ENCODE measurements at regions of chr16 and their contacts with region 1.

Region 1: GRCh38 chr16:21554795-21555585 is 44.4 kb upstream of the METTL9 start:
- DNase-seq: peak; percentile 81 to 96 (median 89)
- ATAC-seq: peak; percentile 99
- H3K4me3 ChIP-seq: peak overlapping the region in 1 of 2 experiments; percentile 14
- H3K4me3 Mint-ChIP-seq: peak overlapping the region; percentile 57
- H3K27ac ChIP-seq: no peak overlapping the region
- H3K27ac Mint-ChIP-seq: no peak overlapping the region
- H3K4me1 ChIP-seq: peaks cover 3% of the 10 kb centered on the region
- H3K4me1 Mint-ChIP-seq: peaks cover 6% of the 10 kb centered on the region
- H3K27me3 ChIP-seq: peaks cover 0 to 3% of the 10 kb centered on the region in 2 experiments
- H3K27me3 Mint-ChIP-seq: peaks cover 6% of the 10 kb centered on the region
- CTCF ChIP-seq: peak; percentile 100

Region 2: DNA sequence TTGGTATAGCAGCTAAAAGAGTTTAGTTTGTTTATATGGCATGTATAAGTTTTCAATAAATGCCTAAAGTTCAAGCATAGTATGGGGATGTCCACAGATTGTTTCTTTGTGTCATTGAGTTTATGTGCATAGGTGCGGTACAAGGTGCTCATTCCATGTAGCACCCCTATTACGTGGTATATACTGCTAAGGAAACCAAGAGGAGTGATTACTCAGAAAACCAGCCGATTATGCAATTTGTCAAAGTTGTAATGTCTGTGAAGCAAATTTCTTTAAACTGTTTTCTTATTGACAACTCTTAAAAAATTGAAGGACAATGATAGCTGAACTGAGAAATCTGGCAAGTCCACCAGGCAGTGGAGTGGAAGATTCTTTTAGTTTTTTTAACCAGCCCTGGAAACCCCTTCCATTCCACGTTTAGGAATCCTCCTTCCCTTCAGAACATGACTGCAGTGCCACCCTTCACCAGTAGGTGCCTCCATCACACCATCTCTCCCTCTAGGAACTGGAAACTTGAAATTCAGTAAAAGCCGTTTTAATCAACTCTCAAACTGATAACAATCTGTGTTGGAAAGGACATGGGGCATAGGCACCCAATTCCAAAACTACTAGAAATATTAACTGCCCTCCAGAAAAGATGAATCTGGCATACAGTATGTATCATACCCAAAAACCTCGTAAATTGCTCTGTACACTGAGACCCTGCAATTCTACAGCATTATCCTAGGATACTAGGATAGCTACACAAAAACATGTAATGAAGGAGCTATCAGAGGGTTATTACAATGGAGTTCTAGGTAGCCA is 705.2 kb before region 1 on chr16:
- CTCF ChIA-PET with region 1: no interaction called
- POLR2A ChIA-PET with region 1: no interaction called
- intact Hi-C with region 1: loop called in 1 of 2 experiments (anchors 2 kb)
- DNase-seq: peak; percentile 37 to 76 (median 66)
- ATAC-seq: peak; percentile 73
- H3K4me3 ChIP-seq: no peak overlapping the region
- H3K4me3 Mint-ChIP-seq: no peak overlapping the region
- H3K27ac ChIP-seq: no peak overlapping the region
- H3K27ac Mint-ChIP-seq: no peak overlapping the region
- H3K4me1 ChIP-seq: peaks cover 6% of the 10 kb centered on the region
- H3K4me1 Mint-ChIP-seq: peaks cover 13% of the 10 kb centered on the region
- H3K27me3 ChIP-seq: no peaks in the 10 kb centered on the region
- H3K27me3 Mint-ChIP-seq: no peaks in the 10 kb centered on the region
- CTCF ChIP-seq: peak; percentile 99

Region 3: DNA sequence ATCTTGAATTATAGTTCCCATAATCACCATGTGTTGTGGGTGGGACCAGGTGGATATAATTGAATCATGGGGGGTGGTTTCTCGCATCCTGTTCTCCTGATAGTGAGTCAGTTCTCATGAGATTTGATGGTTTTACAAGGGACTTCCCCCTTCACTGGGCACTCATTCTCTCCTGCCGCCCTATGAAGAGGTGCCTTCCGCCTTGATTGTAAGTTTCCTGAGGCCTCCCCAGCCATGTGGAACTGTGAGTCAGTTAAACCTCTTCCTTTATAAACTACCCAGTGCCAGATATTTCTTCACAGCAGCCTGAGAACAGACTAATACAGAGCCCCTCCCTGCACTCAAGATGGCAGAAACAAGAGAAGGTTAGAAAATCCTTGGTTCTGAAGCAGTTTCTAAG is 370.2 kb before region 1 on chr16:
- CTCF ChIA-PET with region 1: interaction called, 6 read pairs
- POLR2A ChIA-PET with region 1: no interaction called
- intact Hi-C with region 1: loop called (anchors 1 kb)
- DNase-seq: no peak
- ATAC-seq: no peak
- H3K4me3 ChIP-seq: no peak overlapping the region
- H3K4me3 Mint-ChIP-seq: no peak overlapping the region
- H3K27ac ChIP-seq: no peak overlapping the region
- H3K27ac Mint-ChIP-seq: no peak overlapping the region
- H3K4me1 ChIP-seq: no peaks in the 10 kb centered on the region
- H3K4me1 Mint-ChIP-seq: peaks cover 3% of the 10 kb centered on the region
- H3K27me3 ChIP-seq: no peaks in the 10 kb centered on the region
- H3K27me3 Mint-ChIP-seq: peaks cover 2% of the 10 kb centered on the region
- CTCF ChIP-seq: no peak

Region 4: GRCh38 chr16:21277927-21278706 is 276.9 kb before region 1 on chr16 and contains the start of gene CRYM:
- CTCF ChIA-PET with region 1: no interaction called
- POLR2A ChIA-PET with region 1: no interaction called
- intact Hi-C with region 1: no loop called
- DNase-seq: peak in 5 of 9 experiments; percentile 16 to 42 (median 22)
- ATAC-seq: peak; percentile 70
- H3K4me3 ChIP-seq: no peak within 1 kb of the TSS
- H3K4me3 Mint-ChIP-seq: peak within 1 kb of the TSS; percentile 29
- H3K27ac ChIP-seq: no peak within 1 kb of the TSS
- H3K27ac Mint-ChIP-seq: no peak within 1 kb of the TSS
- H3K4me1 ChIP-seq: peaks cover 6% of the 10 kb centered on the region
- H3K4me1 Mint-ChIP-seq: no peaks in the 10 kb centered on the region
- H3K27me3 ChIP-seq: peaks cover 5 to 14% of the 10 kb centered on the region in 2 experiments
- H3K27me3 Mint-ChIP-seq: peaks cover 64% of the 10 kb centered on the region
- CTCF ChIP-seq: no peak
- total RNA-seq, gene CRYM: not detected

Region 5: DNA sequence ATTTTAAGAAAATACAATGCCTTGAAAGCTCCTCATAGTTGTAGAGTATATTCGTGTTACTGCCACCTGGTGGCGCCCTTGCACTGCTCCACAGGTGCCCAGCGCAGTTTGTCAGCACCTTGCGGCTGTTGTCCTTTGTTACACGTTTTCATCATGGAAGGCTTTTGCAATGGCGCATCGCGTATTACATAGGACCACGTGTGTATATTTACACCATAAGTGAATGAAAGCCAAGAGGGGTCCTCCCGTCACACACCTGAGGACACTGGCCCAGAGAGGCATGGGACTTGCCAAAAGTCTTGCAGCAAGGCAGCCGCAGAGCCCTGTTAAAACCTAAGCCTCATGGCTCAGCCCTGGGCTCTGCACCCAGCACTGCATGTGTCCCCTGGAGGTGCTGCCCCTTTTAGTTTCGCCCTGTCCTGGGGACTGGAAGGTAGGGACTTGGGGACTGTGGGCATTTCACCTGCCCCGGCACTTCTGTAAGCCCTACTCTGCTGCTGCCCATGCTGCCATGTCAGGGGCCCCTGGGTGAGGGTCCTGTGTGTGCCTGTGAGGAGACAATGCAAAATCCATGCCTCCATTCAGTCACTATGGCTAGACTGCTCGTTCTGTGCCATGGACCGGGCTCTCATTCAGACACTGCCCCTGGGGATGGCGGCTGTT is 766.5 kb after region 1 on chr16:
- CTCF ChIA-PET with region 1: no interaction called
- POLR2A ChIA-PET with region 1: no interaction called
- intact Hi-C with region 1: loop called in 1 of 2 experiments (anchors 10 kb)
- DNase-seq: peak; percentile 44 to 84 (median 72)
- ATAC-seq: peak; percentile 77
- H3K4me3 ChIP-seq: no peak overlapping the region
- H3K4me3 Mint-ChIP-seq: no peak overlapping the region
- H3K27ac ChIP-seq: no peak overlapping the region
- H3K27ac Mint-ChIP-seq: peak overlapping the region; percentile 70
- H3K4me1 ChIP-seq: peaks cover 6% of the 10 kb centered on the region
- H3K4me1 Mint-ChIP-seq: peaks cover 9% of the 10 kb centered on the region
- H3K27me3 ChIP-seq: no peaks in the 10 kb centered on the region
- H3K27me3 Mint-ChIP-seq: no peaks in the 10 kb centered on the region
- CTCF ChIP-seq: peak; percentile 92

Region 6: DNA sequence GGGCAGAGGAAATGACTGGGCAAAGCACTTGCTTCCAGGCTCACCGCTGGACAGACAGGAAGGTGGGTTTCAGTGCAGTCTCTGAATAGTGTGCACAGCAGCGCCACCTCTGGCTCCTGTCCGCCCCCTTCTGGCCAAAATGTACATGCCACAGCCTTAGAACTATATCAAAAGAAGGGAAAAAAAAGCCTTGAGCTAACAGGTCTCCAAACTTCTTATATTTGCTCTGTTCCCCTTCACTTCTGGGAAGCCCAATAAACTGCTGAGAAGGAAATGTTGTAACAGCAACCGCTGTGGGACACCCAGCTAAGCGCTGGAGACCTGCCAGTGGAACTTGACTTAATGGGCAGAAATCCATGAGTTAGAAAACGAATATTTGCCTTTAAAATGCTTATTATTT is 1880.5 kb after region 1 on chr16:
- CTCF ChIA-PET with region 1: no interaction called
- POLR2A ChIA-PET with region 1: no interaction called
- intact Hi-C with region 1: loop called in 1 of 2 experiments (anchors 10 kb)
- DNase-seq: peak; percentile 29 to 77 (median 67)
- ATAC-seq: peak; percentile 97
- H3K4me3 ChIP-seq: no peak overlapping the region
- H3K4me3 Mint-ChIP-seq: no peak overlapping the region
- H3K27ac ChIP-seq: no peak overlapping the region
- H3K27ac Mint-ChIP-seq: no peak overlapping the region
- H3K4me1 ChIP-seq: no peaks in the 10 kb centered on the region
- H3K4me1 Mint-ChIP-seq: peaks cover 6% of the 10 kb centered on the region
- H3K27me3 ChIP-seq: no peaks in the 10 kb centered on the region
- H3K27me3 Mint-ChIP-seq: no peaks in the 10 kb centered on the region
- CTCF ChIP-seq: peak; percentile 67